Calu3 (cell line): ENCODE measurements at regions of chr13 and their contacts with region 1.

Region 1: GRCh38 chr13:70310396-70311119 is 202.3 kb upstream of the KLHL1 start:
- DNase-seq: peak; percentile 8
- H3K4me3 Mint-ChIP-seq: no peak overlapping the region
- H3K27ac Mint-ChIP-seq: no peak overlapping the region
- H3K4me1 Mint-ChIP-seq: no peaks in the 10 kb centered on the region
- H3K27me3 Mint-ChIP-seq: no peaks in the 10 kb centered on the region
- CTCF ChIP-seq: no peak

Region 2: DNA sequence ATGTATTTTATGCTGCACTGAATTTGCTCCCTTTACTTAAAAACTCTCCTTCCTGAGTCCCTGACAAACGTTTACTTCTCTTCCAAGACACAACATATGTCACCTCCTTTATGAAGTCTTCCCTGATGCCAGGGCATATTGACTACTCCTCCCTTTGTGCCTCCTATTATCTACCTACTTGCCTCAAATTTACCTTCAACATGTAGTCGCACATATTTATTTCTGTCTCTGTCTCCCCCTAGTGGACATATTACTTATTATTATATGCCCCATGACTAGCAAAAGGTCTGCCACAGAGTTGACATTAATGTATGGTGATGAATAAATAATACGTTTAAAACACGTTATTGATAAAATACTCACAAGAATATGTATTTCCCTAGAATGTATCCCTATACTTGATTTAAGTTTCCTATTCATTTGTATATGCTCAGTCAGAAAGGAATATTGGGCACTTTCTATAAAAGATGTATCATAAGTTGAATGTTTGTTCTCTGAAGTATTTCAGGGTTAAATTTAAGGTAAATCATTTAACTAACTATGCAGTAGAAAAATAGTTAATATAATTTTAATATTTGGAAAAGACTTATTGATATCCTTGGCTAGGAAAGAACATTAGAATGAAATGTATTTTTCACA is 453.3 kb before region 1 on chr13:
- CTCF ChIA-PET with region 1: no interaction called
- intact Hi-C with region 1: loop called (anchors 2 kb)
- DNase-seq: no peak
- H3K4me3 Mint-ChIP-seq: no peak overlapping the region
- H3K27ac Mint-ChIP-seq: peak overlapping the region; percentile 11
- H3K4me1 Mint-ChIP-seq: peaks cover 14% of the 10 kb centered on the region
- H3K27me3 Mint-ChIP-seq: no peaks in the 10 kb centered on the region
- CTCF ChIP-seq: no peak

Region 3: DNA sequence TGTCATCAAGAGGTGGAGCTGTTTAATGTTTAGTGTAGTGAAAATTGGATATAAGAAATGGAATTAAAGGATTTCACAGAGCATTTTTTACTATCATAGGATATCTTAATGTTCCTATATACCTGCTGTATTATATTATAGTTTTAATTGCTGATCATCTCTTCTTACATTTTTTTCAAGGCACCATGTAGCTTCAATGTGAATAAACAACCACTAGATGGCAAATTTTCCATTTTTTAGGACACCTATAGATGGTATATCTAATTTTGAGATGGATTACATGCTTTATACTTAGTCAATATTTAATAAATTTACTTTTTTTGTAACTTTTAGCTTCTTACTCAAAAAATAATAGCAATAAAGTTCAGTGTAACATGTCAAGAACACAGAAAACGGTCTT is 211.9 kb before region 1 on chr13:
- CTCF ChIA-PET with region 1: no interaction called
- intact Hi-C with region 1: loop called (anchors 1 kb)
- DNase-seq: no peak
- H3K4me3 Mint-ChIP-seq: no peak overlapping the region
- H3K27ac Mint-ChIP-seq: no peak overlapping the region
- H3K4me1 Mint-ChIP-seq: no peaks in the 10 kb centered on the region
- H3K27me3 Mint-ChIP-seq: no peaks in the 10 kb centered on the region
- CTCF ChIP-seq: no peak

Region 4: GRCh38 chr13:70430256-70430655 is 119.7 kb after region 1 on chr13:
- CTCF ChIA-PET with region 1: no interaction called
- intact Hi-C with region 1: no loop called
- DNase-seq: no peak
- H3K4me3 Mint-ChIP-seq: no peak overlapping the region
- H3K27ac Mint-ChIP-seq: no peak overlapping the region
- H3K4me1 Mint-ChIP-seq: no peaks in the 10 kb centered on the region
- H3K27me3 Mint-ChIP-seq: no peaks in the 10 kb centered on the region
- CTCF ChIP-seq: no peak

Region 5: GRCh38 chr13:70505834-70506461 is 195.4 kb after region 1 on chr13:
- CTCF ChIA-PET with region 1: no interaction called
- intact Hi-C with region 1: no loop called
- DNase-seq: no peak
- H3K4me3 Mint-ChIP-seq: no peak overlapping the region
- H3K27ac Mint-ChIP-seq: peak overlapping the region; percentile 33
- H3K4me1 Mint-ChIP-seq: no peaks in the 10 kb centered on the region
- H3K27me3 Mint-ChIP-seq: no peaks in the 10 kb centered on the region
- CTCF ChIP-seq: no peak